ENCODE measurements at regions of chr6 and their contacts with region 1.

Region 1: DNA sequence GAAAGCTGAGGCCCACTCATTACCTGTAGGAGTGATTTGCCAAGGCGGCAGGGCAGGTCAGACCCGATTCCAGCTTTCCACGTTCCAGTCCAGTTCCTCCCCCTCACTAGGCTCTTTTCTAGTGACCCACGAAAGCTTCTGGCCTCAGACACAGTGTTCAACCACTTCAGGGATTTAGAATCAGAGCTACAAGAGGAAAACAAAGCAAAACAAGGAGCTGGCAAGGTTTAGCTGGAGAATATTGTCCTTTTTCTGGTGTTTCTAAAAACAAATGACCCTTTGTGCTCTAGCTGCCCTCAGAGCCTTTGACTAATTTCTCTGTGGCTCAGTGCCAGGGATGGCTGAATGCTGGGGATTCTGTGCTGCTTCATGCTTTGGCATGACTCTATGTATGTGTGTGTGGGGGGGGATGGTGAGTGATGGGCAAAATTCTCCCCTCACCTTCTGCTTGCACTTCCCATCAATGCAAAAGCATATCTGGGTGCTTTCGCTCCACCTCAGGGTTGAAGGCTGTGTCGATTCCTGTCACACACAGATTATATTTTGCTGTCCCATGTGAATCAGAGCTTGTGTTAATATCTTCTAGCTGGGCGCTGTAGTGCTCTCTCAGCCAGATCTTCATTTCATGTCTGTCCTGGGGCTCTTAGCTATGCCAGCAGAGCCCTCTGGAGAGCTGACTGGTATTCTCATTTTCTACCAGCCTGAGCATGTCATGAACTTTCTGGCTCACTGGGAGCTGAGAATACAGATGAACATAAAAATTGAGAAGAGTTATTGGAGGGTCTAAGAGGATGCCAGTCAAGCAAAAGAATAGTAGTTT is 19.3 kb upstream of the NEDD9 start:
- DNase-seq: peak; percentile 36 to 79
- ATAC-seq: peak; percentile 74 to 93 (median 87)
- H3K4me3 ChIP-seq: peak overlapping the region in 1 of 10 donors; percentile 1
- H3K27ac ChIP-seq: peak overlapping the region; percentile 43 to 79 (median 62)
- H3K4me1 ChIP-seq: peaks cover 11 to 28% (median 20%) of the 10 kb centered on the region in 9 donors
- H3K27me3 ChIP-seq: no peaks in the 10 kb centered on the region
- CTCF ChIP-seq: no peak

Region 2: DNA sequence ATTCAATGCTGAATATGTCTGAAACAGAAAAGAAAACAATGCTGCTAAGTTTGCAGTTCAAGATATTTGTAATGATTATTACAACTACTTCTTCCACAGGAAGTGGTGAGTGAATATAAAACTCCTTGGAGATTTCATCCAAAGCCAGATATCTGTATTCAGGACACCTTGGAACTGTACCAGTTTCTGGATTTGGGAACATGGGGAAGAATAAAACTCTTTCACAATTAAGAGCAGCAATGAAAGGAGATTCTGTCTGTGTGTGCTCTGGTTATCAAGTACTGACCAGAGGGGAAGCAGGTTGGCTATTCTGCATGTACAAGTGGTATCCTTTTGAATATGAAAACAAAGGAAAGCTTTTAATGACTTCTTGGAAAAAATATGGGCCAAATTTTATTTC is 228.7 kb before region 1 on chr6:
- intact Hi-C with region 1: no loop called
- DNase-seq: no peak
- ATAC-seq: peak in 7 of 8 donors; percentile 22 to 66 (median 55)
- H3K4me3 ChIP-seq: no peak overlapping the region
- H3K27ac ChIP-seq: peak overlapping the region in 4 of 10 donors; percentile 32 to 60 (median 48)
- H3K4me1 ChIP-seq: peaks cover 0 to 65% (median 30%) of the 10 kb centered on the region in 9 donors
- H3K27me3 ChIP-seq: peaks cover 0 to 11% (median 3%) of the 10 kb centered on the region in 7 donors
- CTCF ChIP-seq: no peak

Region 3: GRCh38 chr6:11317885-11318771 is 66.4 kb after region 1 on chr6:
- intact Hi-C with region 1: loop called in 1 of 10 experiments (anchors 10 kb)
- DNase-seq: peak; percentile 29 to 62
- ATAC-seq: peak; percentile 65 to 91 (median 78)
- H3K4me3 ChIP-seq: no peak overlapping the region
- H3K27ac ChIP-seq: peak overlapping the region in 9 of 10 donors; percentile 12 to 71 (median 57)
- H3K4me1 ChIP-seq: peaks cover 0 to 44% (median 17%) of the 10 kb centered on the region in 9 donors
- H3K27me3 ChIP-seq: no peaks in the 10 kb centered on the region
- CTCF ChIP-seq: no peak

Measured in heart right ventricle (tissue), 16 donors.